Activated CD4-positive, alpha-beta T cell treated with anti-CD3 and anti-CD28 coated beads for 36 hours (primary cell): ENCODE measurements at regions of chr3 and their contacts with region 1.

Region 1: GRCh38 chr3:181709537-181710279 is 2.0 kb upstream of the SOX2 start:
- DNase-seq: peak; percentile 85
- ATAC-seq: no peak
- H3K4me3 Mint-ChIP-seq: no peak overlapping the region
- H3K27ac Mint-ChIP-seq: no peak overlapping the region
- H3K4me1 Mint-ChIP-seq: peaks cover 6% of the 10 kb centered on the region
- H3K27me3 Mint-ChIP-seq: peaks cover 52% of the 10 kb centered on the region

Region 2: DNA sequence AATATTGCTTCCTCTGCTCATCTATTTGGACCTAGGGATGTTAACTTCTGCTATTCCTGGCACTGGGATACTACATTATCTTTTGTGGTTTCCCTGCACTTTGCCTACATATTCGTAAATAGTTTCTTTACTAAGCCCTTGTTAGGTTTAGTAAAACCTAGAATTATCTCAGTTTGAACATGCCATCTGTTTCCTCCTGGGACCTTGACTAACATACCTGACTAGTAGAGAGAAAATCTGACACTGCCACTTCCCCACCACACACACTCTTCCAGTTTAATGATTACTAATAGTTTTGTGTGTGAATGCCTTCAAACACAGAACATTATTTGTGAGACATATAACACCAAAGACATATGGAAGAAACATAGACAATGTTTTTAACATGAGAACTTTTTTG is 26.1 kb before region 1 on chr3:
- CTCF ChIA-PET with region 1: no interaction called
- POLR2A ChIA-PET with region 1: no interaction called
- intact Hi-C with region 1: no loop called
- DNase-seq: no peak
- ATAC-seq: no peak
- H3K4me3 Mint-ChIP-seq: no peak overlapping the region
- H3K27ac Mint-ChIP-seq: no peak overlapping the region
- H3K4me1 Mint-ChIP-seq: no peaks in the 10 kb centered on the region
- H3K27me3 Mint-ChIP-seq: peaks cover 16% of the 10 kb centered on the region

Region 3: GRCh38 chr3:181726351-181727330 is 16.9 kb after region 1 on chr3:
- CTCF ChIA-PET with region 1: interaction called, 4 read pairs
- POLR2A ChIA-PET with region 1: no interaction called
- intact Hi-C with region 1: loop called (anchors 1 to 2 kb)
- DNase-seq: no peak
- ATAC-seq: no peak
- H3K4me3 Mint-ChIP-seq: peak overlapping the region; percentile 35
- H3K27ac Mint-ChIP-seq: no peak overlapping the region
- H3K4me1 Mint-ChIP-seq: peaks cover 12% of the 10 kb centered on the region
- H3K27me3 Mint-ChIP-seq: peaks cover 88% of the 10 kb centered on the region

Region 4: GRCh38 chr3:182258538-182259177 is 549.0 kb after region 1 on chr3:
- CTCF ChIA-PET with region 1: no interaction called
- POLR2A ChIA-PET with region 1: no interaction called
- intact Hi-C with region 1: loop called (anchors 1 to 10 kb)
- DNase-seq: no peak
- ATAC-seq: no peak
- H3K4me3 Mint-ChIP-seq: no peak overlapping the region
- H3K27ac Mint-ChIP-seq: no peak overlapping the region
- H3K4me1 Mint-ChIP-seq: no peaks in the 10 kb centered on the region
- H3K27me3 Mint-ChIP-seq: peaks cover 8% of the 10 kb centered on the region

Region 5: GRCh38 chr3:182490596-182491491 is 781.1 kb after region 1 on chr3:
- CTCF ChIA-PET with region 1: interaction called, 4 read pairs
- POLR2A ChIA-PET with region 1: no interaction called
- intact Hi-C with region 1: loop called in 1 of 2 experiments (anchors 1 kb)
- DNase-seq: peak; percentile 9
- ATAC-seq: no peak
- H3K4me3 Mint-ChIP-seq: no peak overlapping the region
- H3K27ac Mint-ChIP-seq: no peak overlapping the region
- H3K4me1 Mint-ChIP-seq: no peaks in the 10 kb centered on the region
- H3K27me3 Mint-ChIP-seq: no peaks in the 10 kb centered on the region